Prostate gland (tissue), 2 donors: ENCODE measurements at regions of chr2 and their contacts with region 1.

Region 1: DNA sequence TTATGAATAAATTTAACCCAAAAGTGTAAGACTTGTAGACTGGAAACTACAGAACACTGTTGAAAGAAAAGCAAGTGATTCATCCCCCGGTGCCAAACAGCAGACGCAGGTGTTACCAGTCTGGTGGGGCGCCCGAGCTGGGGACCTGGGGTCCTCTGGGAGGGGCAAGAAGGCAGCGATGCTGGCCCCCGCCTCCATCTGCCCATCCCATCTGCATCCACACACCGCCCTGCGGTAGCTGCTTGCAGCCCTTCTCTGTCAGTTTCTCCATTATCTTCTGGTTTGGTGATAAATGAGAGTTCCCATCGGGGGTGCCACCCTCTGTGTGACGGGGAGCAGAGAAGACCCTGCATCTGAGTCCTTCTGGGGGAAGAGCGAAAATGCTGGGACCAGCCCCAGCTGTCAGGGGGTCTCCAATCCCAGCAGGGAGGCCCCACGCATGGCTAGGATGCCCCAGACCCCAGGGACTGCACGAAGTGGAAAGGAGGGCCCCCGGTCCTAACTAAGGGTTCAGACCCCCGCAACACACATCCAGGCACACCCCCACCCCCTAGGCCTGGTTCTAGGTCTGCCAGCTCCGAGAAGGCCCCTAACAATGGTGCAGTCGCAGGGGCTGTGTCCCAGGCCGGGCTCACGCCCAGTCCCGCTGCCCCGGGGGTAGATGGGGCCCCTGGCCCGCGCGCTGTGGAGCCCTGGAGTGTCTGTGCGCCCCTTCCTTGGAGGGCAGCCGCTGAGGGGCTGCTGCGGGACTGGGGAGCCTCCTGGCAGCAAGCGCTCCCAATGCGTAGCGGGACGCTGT is 686 bp upstream of the RGPD8 start:
- DNase-seq: no peak
- H3K4me3 ChIP-seq: no peak overlapping the region
- H3K27ac ChIP-seq: no peak overlapping the region
- H3K4me1 ChIP-seq: no peaks in the 10 kb centered on the region
- H3K27me3 ChIP-seq: no peaks in the 10 kb centered on the region
- CTCF ChIP-seq: no peak
- POLR2A ChIP-seq: no peak

Region 2: DNA sequence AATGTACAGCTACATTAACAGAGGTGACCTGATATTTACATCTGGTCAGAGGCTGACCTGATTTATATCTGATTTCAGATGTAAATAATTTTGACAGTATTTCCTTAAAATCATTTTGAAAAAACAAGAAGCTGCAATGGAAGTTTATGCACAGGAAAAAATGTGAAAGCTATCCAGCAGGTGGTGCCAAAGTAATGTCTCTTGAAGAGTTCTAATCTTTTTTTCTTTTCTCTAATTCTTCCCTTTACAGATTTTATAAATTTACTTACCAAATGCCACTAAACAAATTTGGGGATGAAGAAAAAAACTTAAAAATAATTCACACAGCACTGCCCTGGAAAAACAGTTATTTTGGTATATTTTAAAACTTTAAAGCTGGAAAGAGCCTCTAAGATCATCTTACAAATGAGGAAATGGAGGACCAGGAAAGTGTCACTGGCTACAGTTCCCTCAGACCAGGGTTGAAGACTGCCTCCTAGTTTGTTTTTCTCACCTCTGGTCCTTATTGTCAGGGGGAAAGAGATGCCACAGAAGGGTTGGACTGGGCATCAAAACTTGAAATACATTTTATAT is 312.4 kb before region 1 on chr2:
- intact Hi-C with region 1: loop called (anchors 10 kb)
- DNase-seq: no peak
- H3K4me3 ChIP-seq: no peak overlapping the region
- H3K27ac ChIP-seq: no peak overlapping the region
- H3K4me1 ChIP-seq: no peaks in the 10 kb centered on the region
- H3K27me3 ChIP-seq: no peaks in the 10 kb centered on the region
- CTCF ChIP-seq: peak in 3 of 4 experiments; percentile 32 to 65 (median 57)
- POLR2A ChIP-seq: no peak

Region 3: GRCh38 chr2:112254466-112255239 is 179.5 kb before region 1 on chr2 and contains the start of gene ZC3H8:
- intact Hi-C with region 1: loop called (anchors 5 kb)
- DNase-seq: peak; percentile 92
- H3K4me3 ChIP-seq: peak within 1 kb of the TSS; percentile 55 to 73
- H3K27ac ChIP-seq: peak within 1 kb of the TSS; percentile 84 to 85
- H3K4me1 ChIP-seq: peaks cover 6% of the 10 kb centered on the region
- H3K27me3 ChIP-seq: no peaks in the 10 kb centered on the region
- CTCF ChIP-seq: no peak
- POLR2A ChIP-seq: peak; percentile 84
- total RNA-seq, gene ZC3H8: 3.3 to 4.9 TPM

Region 4: GRCh38 chr2:112339986-112340385 is 94.1 kb before region 1 on chr2:
- intact Hi-C with region 1: no loop called
- DNase-seq: no peak
- H3K4me3 ChIP-seq: no peak overlapping the region
- H3K27ac ChIP-seq: no peak overlapping the region
- H3K4me1 ChIP-seq: no peaks in the 10 kb centered on the region
- H3K27me3 ChIP-seq: no peaks in the 10 kb centered on the region
- CTCF ChIP-seq: no peak
- POLR2A ChIP-seq: no peak